ENCODE measurements at regions of chr12 and their contacts with region 1.

Region 1: GRCh38 chr12:47837190-47838171 is 17.8 kb upstream of the HDAC7 start:
- DNase-seq: peak; percentile 76
- H3K4me3 ChIP-seq: peak overlapping the region; percentile 31
- H3K27ac ChIP-seq: peak overlapping the region; percentile 93
- H3K4me1 ChIP-seq: peaks cover 60% of the 10 kb centered on the region
- CTCF ChIP-seq: peak; percentile 97

Region 2: DNA sequence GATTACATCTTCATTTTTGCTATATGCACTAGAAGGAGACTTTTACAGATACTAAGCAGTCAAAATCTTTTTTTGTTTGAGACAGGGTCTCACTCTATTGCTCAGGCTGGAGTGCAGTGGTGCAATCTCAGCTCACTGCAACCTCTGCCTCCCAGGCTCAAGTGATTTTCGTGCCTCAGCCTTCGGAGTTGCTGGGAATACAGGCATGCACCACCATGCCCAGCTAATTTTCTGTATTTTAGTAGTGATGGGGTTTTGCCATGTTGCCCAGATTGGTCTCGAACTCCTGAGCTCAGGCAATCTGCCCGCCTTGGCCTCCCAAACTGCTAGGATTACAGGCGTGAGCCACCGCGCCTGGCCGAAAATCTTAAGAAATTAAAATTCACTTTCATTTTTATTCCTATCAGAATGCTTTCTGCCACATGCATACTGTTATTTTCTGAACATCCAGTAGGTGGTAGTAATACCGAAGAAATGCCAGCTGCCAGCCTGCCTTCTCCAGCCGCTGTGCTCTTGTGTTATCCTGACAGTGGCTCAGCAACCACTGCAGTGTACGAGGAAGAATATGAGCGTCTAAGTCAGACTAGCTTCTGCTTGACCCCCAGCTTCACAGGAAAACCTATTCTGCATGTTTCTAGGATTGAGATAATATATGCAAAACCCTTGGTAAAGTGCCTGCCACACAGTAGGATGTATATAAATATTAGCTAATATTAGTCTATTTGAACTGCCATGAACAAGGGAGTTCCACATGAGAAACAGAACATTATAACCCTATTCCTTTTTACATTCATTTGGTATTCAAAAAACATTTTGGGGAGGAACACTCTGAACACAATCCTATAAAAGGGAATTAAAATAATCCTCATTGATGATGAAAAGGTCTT is 185.9 kb before region 1 on chr12:
- CTCF ChIA-PET with region 1: no interaction called
- POLR2A ChIA-PET with region 1: no interaction called
- intact Hi-C with region 1: loop called (anchors 5 kb)
- DNase-seq: peak; percentile 74
- H3K4me3 ChIP-seq: no peak overlapping the region
- H3K27ac ChIP-seq: no peak overlapping the region
- H3K4me1 ChIP-seq: peaks cover 12% of the 10 kb centered on the region
- CTCF ChIP-seq: peak; percentile 81

Region 3: GRCh38 chr12:47742253-47742825 is 95.1 kb before region 1 on chr12:
- CTCF ChIA-PET with region 1: interaction called, 47 read pairs
- POLR2A ChIA-PET with region 1: interaction called, 21 read pairs
- intact Hi-C with region 1: loop called (anchors 1 kb)
- DNase-seq: peak; percentile 67
- H3K4me3 ChIP-seq: no peak overlapping the region
- H3K27ac ChIP-seq: no peak overlapping the region
- H3K4me1 ChIP-seq: peaks cover 44% of the 10 kb centered on the region
- CTCF ChIP-seq: peak; percentile 99

Region 4: GRCh38 chr12:47797441-47797840 is 40.0 kb before region 1 on chr12:
- CTCF ChIA-PET with region 1: interaction called, 28 read pairs
- POLR2A ChIA-PET with region 1: interaction called, 17 read pairs
- intact Hi-C with region 1: loop called (anchors 1 kb)
- DNase-seq: peak; percentile 83
- H3K4me3 ChIP-seq: no peak overlapping the region
- H3K27ac ChIP-seq: no peak overlapping the region
- H3K4me1 ChIP-seq: peaks cover 10% of the 10 kb centered on the region
- CTCF ChIP-seq: peak; percentile 87

Region 5: DNA sequence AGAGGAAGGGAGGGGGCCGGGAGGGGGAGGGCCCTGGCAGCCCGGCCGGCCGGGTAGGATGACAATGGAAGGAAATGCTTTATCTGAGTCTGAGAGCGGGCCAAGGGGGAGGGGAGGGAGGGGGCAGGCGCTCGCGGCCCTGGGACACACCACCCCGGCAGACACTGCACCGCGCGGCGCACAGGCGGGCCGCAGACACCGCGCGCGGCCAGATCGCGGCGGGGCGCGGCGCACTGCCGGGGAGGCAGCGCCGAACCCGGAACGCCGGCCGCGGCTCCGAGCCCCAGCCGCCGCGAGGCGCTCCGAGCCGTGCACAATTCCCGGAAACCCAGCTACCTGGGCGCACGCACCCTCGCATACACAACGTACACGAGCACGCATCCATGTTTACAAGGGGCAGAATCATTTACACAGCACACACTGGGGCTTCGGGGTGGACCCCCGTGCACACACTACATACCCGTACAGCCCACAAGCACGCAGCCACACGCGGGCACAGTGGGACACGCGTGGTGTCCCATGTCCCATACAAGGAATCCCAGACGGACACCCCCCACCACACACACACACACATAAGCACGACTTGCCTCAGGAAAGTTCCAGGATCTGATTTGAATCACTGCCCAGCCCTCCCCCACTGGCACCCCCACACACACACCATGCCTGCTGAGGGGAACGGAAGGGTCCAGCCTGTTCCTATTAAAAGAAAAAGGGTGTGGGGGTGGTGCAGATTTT is 17.4 kb before region 1 on chr12 and contains the start of gene HDAC7:
- CTCF ChIA-PET with region 1: interaction called, 85 read pairs
- POLR2A ChIA-PET with region 1: interaction called, 342 read pairs
- intact Hi-C with region 1: loop called (anchors 1 kb)
- DNase-seq: peak; percentile 83
- H3K4me3 ChIP-seq: peak within 1 kb of the TSS; percentile 83
- H3K27ac ChIP-seq: peak within 1 kb of the TSS; percentile 96
- H3K4me1 ChIP-seq: peaks cover 72% of the 10 kb centered on the region
- CTCF ChIP-seq: no peak
- total RNA-seq, gene HDAC7: 38.4 and 45.9 TPM in 2 replicates

Region 6: DNA sequence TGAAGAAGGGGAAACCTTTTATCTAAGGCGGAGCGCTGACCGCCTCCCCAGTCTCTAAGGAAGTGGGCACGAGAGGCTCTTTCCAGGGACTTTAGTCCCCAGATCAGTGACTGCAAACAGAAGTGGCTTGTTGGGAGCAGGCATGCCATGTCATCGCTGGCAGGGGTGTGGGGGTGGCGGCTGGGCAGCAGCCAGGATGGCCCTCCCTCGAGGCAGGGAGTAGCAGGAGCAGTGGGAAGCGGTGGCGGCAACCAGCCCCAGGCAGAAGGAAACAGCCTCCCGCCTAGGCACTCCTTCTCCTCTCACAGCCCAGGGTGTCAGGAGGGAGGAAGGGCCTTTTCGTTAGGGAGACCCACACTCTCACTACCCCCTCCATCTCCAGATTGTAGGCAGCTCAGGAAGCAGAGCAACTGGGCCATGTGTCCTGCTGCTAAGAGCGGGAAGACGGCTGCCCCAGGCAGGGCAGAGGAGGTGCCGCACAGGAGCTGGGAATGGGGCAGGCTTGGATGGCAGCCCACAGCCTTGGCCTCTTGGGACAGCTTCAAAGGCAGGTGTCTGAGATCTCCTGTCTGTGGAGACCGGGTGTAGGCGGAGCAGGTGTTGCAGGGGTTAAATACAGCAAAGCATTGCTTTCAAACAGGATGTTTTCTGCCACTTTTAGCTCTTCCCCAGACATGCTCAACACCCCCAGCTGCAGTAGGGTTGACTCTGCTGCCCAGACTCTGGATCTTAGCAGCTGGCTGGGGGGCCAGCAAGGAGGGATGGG is 45.5 kb after region 1 on chr12:
- CTCF ChIA-PET with region 1: no interaction called
- POLR2A ChIA-PET with region 1: interaction called, 12 read pairs
- intact Hi-C with region 1: no loop called
- DNase-seq: peak; percentile 91
- H3K4me3 ChIP-seq: peak overlapping the region; percentile 46
- H3K27ac ChIP-seq: peak overlapping the region; percentile 73
- H3K4me1 ChIP-seq: peaks cover 68% of the 10 kb centered on the region
- CTCF ChIP-seq: no peak